Left cardiac atrium (tissue), 4 donors: ENCODE measurements at regions of chr7 and their contacts with region 1.

Region 1: GRCh38 chr7:150404805-150405583 is 25.9 kb downstream of the ZNF775 start:
- DNase-seq: peak; percentile 92
- ATAC-seq: peak; percentile 92 to 95

Region 2: GRCh38 chr7:150341256-150342120 is 63.5 kb before region 1 on chr7 and contains the start of gene RARRES2:
- intact Hi-C with region 1: no loop called
- DNase-seq: peak; percentile 61
- ATAC-seq: peak; percentile 82
- total RNA-seq, gene RARRES2: 86.4 to 178 TPM

Region 3: GRCh38 chr7:150351548-150352194 is 53.3 kb before region 1 on chr7:
- intact Hi-C with region 1: no loop called
- DNase-seq: no peak
- ATAC-seq: no peak

Region 4: DNA sequence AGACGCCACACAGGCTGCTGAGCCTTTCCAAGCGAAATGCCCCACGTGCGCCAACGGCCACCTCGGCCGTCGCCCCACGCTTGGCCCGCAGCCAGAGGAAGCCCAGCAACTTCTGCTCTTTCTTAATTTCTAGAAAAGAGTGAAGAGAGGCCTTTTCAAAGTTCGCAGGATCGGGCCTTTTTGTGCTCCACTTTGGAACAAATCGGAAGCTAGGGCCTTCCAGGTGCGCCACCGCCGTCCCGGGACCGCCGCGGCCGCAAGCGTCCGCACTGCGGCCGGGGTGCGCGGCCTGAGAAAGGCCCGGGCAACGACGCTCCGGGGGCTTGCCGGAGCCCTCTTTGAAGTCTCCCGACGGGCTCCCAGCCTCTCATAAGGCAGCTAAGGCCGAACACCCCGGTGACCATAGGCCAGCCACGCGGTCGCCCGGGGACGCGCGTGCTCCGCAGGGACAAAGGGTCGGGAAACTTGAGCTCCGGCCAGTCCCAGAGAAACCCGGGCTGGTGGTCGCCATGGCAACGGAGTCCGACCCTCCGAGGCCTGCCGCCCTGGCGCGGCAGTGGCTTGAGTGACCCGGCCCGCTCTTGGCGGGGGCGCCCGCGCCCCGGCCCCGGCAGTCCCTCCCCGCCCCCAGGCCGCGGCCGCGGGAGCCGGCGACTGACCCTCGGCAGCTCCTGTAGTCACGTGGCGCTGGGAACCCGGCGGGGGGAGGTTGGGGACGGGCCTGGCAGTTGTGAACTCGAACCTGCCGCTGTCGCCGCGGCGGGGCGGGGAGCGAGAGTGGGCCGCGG is 36.7 kb before region 1 on chr7 and contains the start of gene REPIN1:
- intact Hi-C with region 1: loop called in 1 of 2 experiments (anchors 5 kb)
- DNase-seq: peak; percentile 94
- ATAC-seq: peak; percentile 90
- total RNA-seq, gene REPIN1: 100 to 108 TPM

Region 5: DNA sequence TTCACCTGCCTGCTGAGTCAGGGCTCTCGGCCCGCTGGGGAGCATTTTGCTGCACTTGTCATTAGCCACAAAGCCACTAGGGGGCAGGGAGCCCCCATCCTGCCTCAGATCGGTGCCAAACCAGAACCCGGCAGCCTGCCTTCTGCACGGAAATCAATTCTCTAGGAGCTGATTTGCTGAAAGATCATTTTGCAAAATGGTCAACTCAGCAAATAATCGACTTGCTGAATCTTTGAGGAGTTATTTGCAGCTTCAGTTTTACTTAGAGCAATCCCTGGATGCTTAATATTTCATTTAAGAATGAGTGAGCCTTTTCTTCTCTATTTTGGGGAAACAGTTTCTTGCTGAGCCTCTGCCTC is 43.8 kb after region 1 on chr7:
- intact Hi-C with region 1: no loop called
- DNase-seq: peak; percentile 86
- ATAC-seq: peak; percentile 50 to 64